Caki2 (cell line): ENCODE measurements at regions of chr4 and their contacts with region 1.

Region 1: GRCh38 chr4:102620697-102621497 is 119.7 kb downstream of the NFKB1 start:
- DNase-seq: peak; percentile 91

Region 2: GRCh38 chr4:102196221-102196620 is 424.7 kb before region 1 on chr4:
- in situ Hi-C with region 1: no loop called
- DNase-seq: no peak

Region 3: GRCh38 chr4:102362922-102363432 is 257.9 kb before region 1 on chr4:
- in situ Hi-C with region 1: no loop called
- DNase-seq: no peak

Region 4: DNA sequence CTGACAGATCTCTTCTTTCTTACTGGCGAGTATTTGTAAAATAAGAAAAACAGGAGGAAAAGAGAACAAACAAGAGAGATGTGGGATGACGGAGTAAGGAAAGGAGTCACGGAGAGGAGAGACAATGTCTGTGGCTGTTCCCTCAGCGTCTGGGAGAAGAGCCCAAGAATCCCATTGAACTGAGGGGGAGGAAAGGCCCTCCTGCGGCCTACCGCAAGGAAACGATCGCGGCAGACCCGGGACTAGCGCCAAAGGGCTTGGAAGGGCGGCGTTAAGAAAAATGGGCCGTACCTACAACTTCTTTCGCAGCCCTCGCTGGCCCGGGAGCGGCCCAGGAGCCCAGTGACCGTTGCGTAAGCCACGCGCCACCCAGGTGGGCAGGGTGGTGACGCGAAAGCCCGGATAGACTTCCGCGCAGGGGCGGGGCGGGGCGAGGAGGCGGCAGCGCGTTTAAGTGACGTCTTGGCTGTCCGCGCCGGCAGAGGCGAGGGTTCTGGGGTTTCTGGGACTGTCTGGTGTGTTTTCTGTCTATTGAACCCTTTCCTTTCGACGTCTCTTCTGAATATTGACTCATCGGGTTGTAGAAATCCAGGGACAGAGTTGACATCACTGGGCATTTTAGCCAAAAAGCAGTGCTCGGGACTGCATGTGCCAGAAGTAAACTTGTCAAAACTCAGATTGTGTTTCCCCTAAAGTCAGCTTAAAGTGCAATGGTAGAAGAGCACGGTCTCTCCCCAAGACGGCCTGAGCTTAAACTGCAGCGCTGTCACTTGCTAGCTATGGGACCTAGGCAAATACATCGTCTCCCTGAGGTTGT is 398.6 kb after region 1 on chr4 and contains the start of gene SLC9B1:
- in situ Hi-C with region 1: loop called (anchors 25 kb)
- DNase-seq: peak; percentile 94
- total RNA-seq, gene SLC9B1: not detected in 2 replicates